ENCODE measurements at regions of chr15 and their contacts with region 1.

Region 1: GRCh38 chr15:68372291-68372811 is 59.6 kb downstream of the ITGA11 start:
- DNase-seq: peak; percentile 46 to 66
- ATAC-seq: peak; percentile 86 to 96
- H3K4me3 ChIP-seq: no peak overlapping the region
- H3K27ac ChIP-seq: peak overlapping the region in 1 of 2 experiments; percentile 7; a peak in 2 of 6 replicates
- H3K4me1 ChIP-seq: no peaks in the 10 kb centered on the region
- CTCF ChIP-seq: peak; percentile 29
- EP300 ChIP-seq: no peak
- POLR2A ChIP-seq: no peak
- RAD21 ChIP-seq: peak; percentile 36 to 42; a peak in 3 of 5 replicates

Region 2: DNA sequence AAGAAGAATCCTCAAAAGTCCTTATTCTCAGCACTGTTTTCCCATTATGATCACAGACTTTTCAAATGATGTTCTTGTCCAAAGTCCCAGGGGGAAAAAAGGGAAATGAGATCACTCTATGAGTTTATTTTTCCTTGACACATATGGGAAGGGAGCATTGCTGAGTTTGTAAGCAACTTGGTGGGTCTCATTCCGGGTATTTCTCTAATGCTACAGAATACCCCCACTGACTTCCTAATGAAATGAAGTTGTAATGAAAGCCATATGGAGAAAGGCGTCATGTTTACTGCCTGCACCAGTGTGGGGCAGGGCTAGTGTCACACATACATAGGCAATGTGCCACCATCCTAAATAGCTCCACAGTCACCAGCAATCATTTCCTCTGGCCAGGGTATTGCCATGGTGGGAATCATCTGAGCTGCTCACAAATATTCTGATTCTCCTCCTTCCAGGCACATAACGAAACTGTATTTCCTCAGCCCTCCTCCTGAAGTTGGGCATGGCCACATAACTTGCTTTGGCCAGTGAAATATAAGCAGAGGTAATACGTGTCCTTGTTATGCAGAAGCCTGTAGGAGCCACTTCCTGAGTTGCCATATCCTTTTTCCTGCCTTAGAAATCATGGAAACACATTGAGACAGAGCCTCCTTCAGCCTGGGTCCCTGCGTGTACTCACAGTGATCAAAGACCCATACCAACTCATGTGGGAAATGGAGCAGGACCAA is 892.4 kb before region 1 on chr15:
- CTCF ChIA-PET with region 1: no interaction called
- POLR2A ChIA-PET with region 1: no interaction called
- DNase-seq: no peak
- ATAC-seq: no peak
- H3K4me3 ChIP-seq: no peak overlapping the region
- H3K27ac ChIP-seq: no peak overlapping the region
- H3K4me1 ChIP-seq: no peaks in the 10 kb centered on the region
- CTCF ChIP-seq: no peak
- EP300 ChIP-seq: no peak
- POLR2A ChIP-seq: no peak
- RAD21 ChIP-seq: no peak

Region 3: DNA sequence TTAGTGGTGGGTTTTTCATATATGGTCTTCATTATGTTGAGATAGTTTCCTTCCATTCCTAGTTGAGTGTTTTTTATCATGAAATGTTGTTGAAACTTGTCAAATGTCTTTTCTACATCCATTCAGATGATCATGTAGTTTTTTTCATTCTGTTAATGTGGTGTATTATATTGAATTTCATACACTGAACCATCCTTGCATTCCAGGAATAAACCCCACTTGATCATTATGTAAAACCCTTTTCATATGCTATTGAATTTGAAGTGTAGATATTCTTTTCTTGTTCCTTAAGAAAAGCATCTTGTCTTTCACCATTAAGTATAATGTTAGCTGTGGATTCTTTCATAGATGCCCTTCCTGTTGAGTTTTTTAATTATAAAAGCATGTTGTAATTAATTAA is 275.3 kb before region 1 on chr15:
- CTCF ChIA-PET with region 1: no interaction called
- POLR2A ChIA-PET with region 1: no interaction called
- DNase-seq: peak in 1 of 2 experiments; percentile 48
- ATAC-seq: no peak
- H3K4me3 ChIP-seq: no peak overlapping the region
- H3K27ac ChIP-seq: no peak overlapping the region
- H3K4me1 ChIP-seq: peaks cover 5% of the 10 kb centered on the region; the same call in 2 of the 3 replicates
- CTCF ChIP-seq: no peak
- EP300 ChIP-seq: no peak
- POLR2A ChIP-seq: no peak
- RAD21 ChIP-seq: no peak

Region 4: DNA sequence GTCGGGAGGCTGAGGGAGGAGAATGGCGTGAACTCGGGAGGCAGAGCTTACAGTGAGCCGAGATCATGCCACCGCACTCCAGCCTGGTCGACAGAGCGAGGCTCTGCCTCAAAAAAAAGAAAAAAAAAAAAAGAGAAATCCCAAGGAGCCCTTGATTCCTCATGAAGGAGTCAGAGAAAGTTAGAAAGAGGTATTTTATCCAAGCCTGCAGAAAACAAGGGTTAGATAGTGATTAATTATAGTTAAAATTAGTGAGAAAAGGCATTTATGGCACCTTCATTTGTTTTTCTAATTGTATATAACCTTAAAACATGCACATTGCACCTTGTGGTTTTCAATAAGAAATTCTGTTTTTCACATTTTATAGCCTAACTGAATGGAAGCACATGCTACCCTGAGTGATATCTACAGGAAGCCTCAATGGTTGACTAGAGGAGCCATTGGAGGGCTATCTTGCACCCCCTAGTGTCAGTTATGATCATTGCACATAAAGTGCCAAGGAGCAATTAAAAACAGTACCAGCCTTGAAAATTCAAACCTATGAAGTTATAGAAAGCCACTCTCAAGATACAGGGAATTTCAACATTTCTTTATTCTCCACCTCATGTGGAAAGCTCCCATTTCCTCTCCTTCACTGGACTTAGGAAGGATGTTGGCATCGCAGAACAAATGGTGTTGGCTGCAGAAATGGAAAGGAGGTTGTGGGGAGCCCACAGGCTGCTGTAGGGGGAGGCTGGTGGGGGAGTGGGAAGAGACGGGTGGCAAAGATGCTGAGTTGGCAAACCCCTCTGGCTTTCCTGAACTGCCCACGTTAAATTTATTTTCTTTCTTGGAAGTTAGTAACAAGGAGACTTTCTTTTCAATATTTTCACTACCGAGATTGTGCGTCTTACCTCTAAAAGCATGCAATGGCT is 11.1 kb after region 1 on chr15:
- CTCF ChIA-PET with region 1: interaction called, 15 read pairs
- POLR2A ChIA-PET with region 1: no interaction called
- DNase-seq: peak; percentile 68 to 78
- ATAC-seq: peak in 1 of 2 experiments; percentile 51; a peak in 3 of 6 replicates
- H3K4me3 ChIP-seq: no peak overlapping the region
- H3K27ac ChIP-seq: peak overlapping the region; percentile 78 to 81
- H3K4me1 ChIP-seq: peaks cover 33% of the 10 kb centered on the region
- CTCF ChIP-seq: peak; percentile 66
- EP300 ChIP-seq: no peak
- POLR2A ChIP-seq: no peak
- RAD21 ChIP-seq: peak; percentile 51 to 70

Measured in A549 (cell line).